ENCODE measurements at regions of chr1 and their contacts with region 1.

Region 1: DNA sequence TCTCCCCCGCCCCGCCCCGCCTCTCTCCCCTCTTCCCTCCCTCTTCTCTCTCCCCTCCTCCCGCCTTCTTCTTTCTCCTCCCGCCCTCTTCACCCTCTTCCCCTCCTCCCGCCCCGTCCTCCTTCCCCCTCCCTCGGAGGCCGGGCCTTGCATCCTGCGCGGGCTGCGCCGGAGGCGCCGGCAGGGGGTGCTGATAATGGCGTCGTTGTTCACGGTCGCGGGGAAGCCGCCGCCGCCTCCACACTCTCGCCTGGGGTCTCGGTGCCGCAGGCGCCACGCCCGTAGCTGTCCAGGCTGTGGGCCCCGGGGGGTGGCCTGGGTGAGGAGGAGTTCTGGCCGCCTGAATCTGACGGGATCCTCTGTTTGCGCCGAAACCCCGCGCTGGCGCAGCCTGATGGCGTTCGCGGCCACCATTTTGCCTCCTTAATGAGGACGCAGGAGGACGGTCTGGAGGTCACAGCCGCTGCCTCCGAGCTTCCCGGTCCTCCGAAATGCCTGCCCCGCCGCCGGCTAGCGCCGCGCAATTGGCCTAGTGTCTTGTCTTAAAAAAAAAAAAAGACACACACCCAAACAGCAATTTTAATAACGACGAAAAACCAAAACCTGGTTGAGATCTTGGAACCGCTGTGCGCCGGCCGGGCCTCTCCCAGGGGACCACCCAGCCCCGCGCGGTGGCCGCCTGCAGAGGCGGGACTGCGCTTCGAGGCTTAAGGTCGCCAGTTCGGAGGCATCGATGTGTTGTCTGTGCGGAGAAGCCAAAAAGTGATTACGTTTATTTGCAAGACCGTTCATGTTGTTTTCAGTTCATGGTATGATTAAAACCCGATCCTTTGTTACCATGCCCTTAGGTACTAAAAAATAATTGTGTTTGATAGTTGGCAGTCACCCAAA is 106.6 kb upstream of the HNRNPU start:
- DNase-seq: peak in 1 of 2 donors; percentile 96
- H3K4me3 ChIP-seq: peak overlapping the region; percentile 81 to 83
- H3K27ac ChIP-seq: peak overlapping the region; percentile 99
- H3K4me1 ChIP-seq: peaks cover 22% of the 10 kb centered on the region
- H3K27me3 ChIP-seq: no peaks in the 10 kb centered on the region
- CTCF ChIP-seq: peak in 2 of 3 experiments; percentile 57 to 59
- POLR2A ChIP-seq: peak in 1 of 2 donors; percentile 73

Region 2: GRCh38 chr1:244864253-244865027 is 106.5 kb before region 1 on chr1 and contains the start of gene HNRNPU:
- intact Hi-C with region 1: loop called (anchors 1 kb)
- DNase-seq: peak in 1 of 2 donors; percentile 97
- H3K4me3 ChIP-seq: peak within 1 kb of the TSS; percentile 97 to 100
- H3K27ac ChIP-seq: peak within 1 kb of the TSS; percentile 100
- H3K4me1 ChIP-seq: peaks cover 31% of the 10 kb centered on the region
- H3K27me3 ChIP-seq: no peaks in the 10 kb centered on the region
- CTCF ChIP-seq: peak in 1 of 3 experiments; percentile 44
- POLR2A ChIP-seq: peak; percentile 81 to 99
- total RNA-seq, gene HNRNPU: 293 TPM

Region 3: GRCh38 chr1:245277276-245277675 is 306.4 kb after region 1 on chr1:
- intact Hi-C with region 1: no loop called
- DNase-seq: peak in 1 of 2 donors; percentile 16
- H3K4me3 ChIP-seq: no peak overlapping the region
- H3K27ac ChIP-seq: no peak overlapping the region
- H3K4me1 ChIP-seq: no peaks in the 10 kb centered on the region
- H3K27me3 ChIP-seq: no peaks in the 10 kb centered on the region
- CTCF ChIP-seq: no peak
- POLR2A ChIP-seq: no peak